ENCODE measurements at regions of chr2 and their contacts with region 1.

Region 1: GRCh38 chr2:161273038-161273760 is 35.0 kb upstream of the PSMD14 start:
- DNase-seq: peak; percentile 72
- ATAC-seq: peak; percentile 61
- H3K4me3 ChIP-seq: no peak overlapping the region
- H3K27ac ChIP-seq: no peak overlapping the region
- H3K4me1 ChIP-seq: no peaks in the 10 kb centered on the region
- H3K27me3 ChIP-seq: no peaks in the 10 kb centered on the region; the same call in 1 of the 2 replicates
- CTCF ChIP-seq: peak; percentile 71
- POLR2A ChIP-seq: no peak
- RAD21 ChIP-seq: peak; percentile 66

Region 2: DNA sequence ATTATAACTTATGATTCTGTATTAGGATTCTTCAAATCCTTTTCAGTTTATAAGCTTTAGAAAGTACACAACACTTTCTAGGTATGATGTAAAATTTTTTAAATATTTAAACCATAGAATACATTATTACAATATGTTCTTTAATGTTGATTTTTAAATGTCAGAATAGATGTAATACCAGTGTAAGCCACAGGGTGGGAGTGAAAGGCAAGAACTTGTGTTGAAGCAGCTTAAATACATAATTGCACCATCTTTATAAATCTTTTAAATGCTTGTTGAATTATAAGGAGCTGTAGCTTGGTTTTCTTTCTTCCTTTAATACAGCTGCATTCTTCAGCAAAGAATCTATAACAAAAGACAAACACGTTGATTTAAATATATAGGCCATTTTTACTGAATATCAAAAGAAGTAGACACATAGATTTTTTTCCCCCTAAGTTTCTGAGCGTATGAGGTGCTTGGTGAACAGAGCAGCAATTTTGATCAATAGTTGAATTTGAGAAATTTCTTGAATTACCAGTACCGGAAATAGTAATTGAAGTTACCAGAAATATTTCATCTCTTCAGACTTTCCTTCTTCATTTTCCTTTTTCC is 50.0 kb before region 1 on chr2:
- CTCF ChIA-PET with region 1: interaction called, 3 read pairs
- POLR2A ChIA-PET with region 1: no interaction called
- dilution Hi-C with region 1: no loop called
- in situ Hi-C with region 1: no loop called
- intact Hi-C with region 1: loop called (anchors 1 kb)
- DNase-seq: peak; percentile 64
- ATAC-seq: peak; percentile 88
- H3K4me3 ChIP-seq: no peak overlapping the region
- H3K27ac ChIP-seq: no peak overlapping the region
- H3K4me1 ChIP-seq: no peaks in the 10 kb centered on the region
- H3K27me3 ChIP-seq: no peaks in the 10 kb centered on the region
- CTCF ChIP-seq: peak; percentile 66
- POLR2A ChIP-seq: no peak
- RAD21 ChIP-seq: peak; percentile 64

Region 3: DNA sequence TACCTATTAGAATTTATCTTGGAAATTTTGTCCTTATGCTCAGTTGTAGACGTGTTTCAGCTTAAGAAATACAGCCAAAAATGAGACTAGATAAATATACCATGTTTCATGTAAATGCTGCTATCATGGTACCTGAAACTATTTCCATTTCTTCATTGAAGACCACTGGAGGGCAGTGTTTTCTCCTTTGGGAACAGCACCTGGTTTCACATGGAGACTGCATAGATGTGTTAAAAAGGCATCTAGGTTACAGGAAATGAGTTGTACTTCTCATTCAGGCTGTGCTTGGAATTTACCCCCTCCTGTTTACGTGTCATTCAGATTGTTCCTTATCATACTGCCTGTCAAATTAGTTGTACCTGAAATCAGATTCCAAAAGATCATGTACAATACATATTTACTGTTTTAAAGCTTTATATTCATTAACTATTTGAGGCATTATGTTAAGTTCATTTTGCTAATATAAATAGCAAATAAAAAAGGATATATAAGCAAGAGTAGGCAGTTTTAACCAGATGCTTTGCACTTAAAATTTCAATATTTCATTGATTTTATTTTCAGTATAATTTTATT is 22.2 kb before region 1 on chr2:
- CTCF ChIA-PET with region 1: interaction called, 10 read pairs
- POLR2A ChIA-PET with region 1: no interaction called
- dilution Hi-C with region 1: no loop called
- in situ Hi-C with region 1: no loop called
- intact Hi-C with region 1: loop called (anchors 2 kb)
- DNase-seq: peak; percentile 37
- ATAC-seq: no peak
- H3K4me3 ChIP-seq: no peak overlapping the region
- H3K27ac ChIP-seq: no peak overlapping the region
- H3K4me1 ChIP-seq: no peaks in the 10 kb centered on the region
- H3K27me3 ChIP-seq: peaks cover 23% of the 10 kb centered on the region
- CTCF ChIP-seq: peak; percentile 53
- POLR2A ChIP-seq: no peak
- RAD21 ChIP-seq: peak; percentile 45

Measured in IMR-90 (cell line).